Right ventricle myocardium superior (tissue), 1 donor: ENCODE measurements at regions of chr14 and their contacts with region 1.

Region 1: GRCh38 chr14:34030864-34031263 is 80.0 kb upstream of the EGLN3 start:
- DNase-seq: peak; percentile 60
- ATAC-seq: peak; percentile 53

Region 2: GRCh38 chr14:33950320-33951182 is 80.3 kb before region 1 on chr14 and contains the start of gene EGLN3:
- intact Hi-C with region 1: loop called (anchors 10 kb)
- DNase-seq: peak; percentile 94
- ATAC-seq: peak; percentile 98
- total RNA-seq, gene EGLN3: 111 TPM

Region 3: DNA sequence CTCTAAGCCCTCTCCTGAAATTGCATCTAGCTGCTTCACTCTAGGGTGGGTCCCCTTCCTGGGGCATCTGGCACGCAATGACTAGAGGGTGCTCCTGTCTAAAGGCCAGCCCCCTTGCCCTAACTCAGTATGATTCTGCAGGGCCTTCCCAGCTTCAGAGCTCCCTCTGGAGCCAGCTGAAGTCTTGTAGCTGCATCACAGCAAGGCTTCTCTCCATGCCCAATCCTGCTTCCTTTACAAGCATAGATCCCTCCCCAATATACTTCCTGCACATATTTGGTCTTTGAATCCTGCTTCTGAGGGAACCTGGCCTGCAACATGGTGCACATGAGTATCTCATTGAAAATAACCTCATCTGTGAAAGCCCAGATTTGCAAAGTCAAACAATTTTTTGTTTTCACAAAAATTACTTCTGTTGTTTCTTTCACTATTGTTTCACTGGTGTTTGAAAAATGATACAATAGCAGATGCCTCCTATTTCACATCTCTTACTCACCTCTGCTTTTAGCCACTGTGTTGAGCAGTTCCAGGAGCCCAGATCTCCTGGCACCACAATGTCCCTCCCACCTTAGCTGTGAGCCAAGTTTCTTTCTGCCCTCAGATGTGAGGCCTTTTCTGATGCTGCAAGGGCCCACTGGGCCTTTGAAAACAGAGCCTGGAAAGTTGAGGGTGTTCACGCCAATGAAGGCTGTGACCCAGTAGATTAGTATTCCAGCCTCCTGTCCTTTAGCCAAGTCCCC is 89.5 kb after region 1 on chr14:
- intact Hi-C with region 1: no loop called
- DNase-seq: no peak
- ATAC-seq: peak; percentile 75

Region 4: DNA sequence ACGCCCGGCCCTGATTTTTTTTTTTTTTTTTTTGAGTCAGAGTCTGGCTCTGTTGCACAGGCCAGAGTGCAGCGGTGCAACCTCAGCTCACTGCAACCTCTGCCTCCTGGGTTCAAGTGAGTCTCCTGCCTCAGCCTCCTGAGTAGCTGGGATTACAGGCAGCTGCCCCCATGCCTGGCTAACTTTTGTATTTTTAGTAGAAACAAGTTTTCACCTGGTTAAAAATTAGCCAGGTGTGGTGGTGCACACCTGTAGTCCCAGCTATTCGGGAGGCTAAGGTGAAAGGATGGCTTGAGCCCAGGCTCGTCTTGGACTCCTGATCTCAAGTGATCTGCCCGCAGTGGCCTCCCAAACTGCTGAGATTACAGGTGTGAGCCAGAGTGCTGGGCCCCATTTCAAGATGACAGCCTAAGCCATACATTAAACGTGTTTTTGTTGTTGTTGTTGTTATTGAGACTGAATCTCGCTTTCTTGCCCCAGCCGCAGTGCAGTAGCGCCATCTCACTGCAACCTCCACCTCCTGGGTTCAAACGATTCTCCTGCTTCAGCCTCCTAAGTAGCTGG is 551.3 kb after region 1 on chr14:
- intact Hi-C with region 1: no loop called
- DNase-seq: peak; percentile 6
- ATAC-seq: no peak